PC-9 (cell line): ENCODE measurements at regions of chr9 and their contacts with region 1.

Region 1: GRCh38 chr9:88578121-88579054 is 43.4 kb downstream of the NXNL2 start:
- DNase-seq: peak; percentile 52 to 87
- H3K4me3 ChIP-seq: peak overlapping the region; percentile 25; the same call in 1 of the 2 replicates
- H3K27ac ChIP-seq: no peak overlapping the region
- H3K4me1 ChIP-seq: peaks cover 4% of the 10 kb centered on the region; the same call in 1 of the 2 replicates
- H3K27me3 ChIP-seq: no peaks in the 10 kb centered on the region
- CTCF ChIP-seq: peak; percentile 93

Region 2: GRCh38 chr9:87684627-87685219 is 893.7 kb before region 1 on chr9:
- CTCF ChIA-PET with region 1: no interaction called
- POLR2A ChIA-PET with region 1: no interaction called
- intact Hi-C with region 1: loop called (anchors 10 kb)
- DNase-seq: peak in 1 of 2 experiments; percentile 64
- H3K4me3 ChIP-seq: no peak overlapping the region
- H3K27ac ChIP-seq: peak overlapping the region; percentile 36; the same call in 1 of the 2 replicates
- H3K4me1 ChIP-seq: 0 out of 2 replicates have a peak, but pooled peaks cover 5% of the 10 kb centered on the region
- H3K27me3 ChIP-seq: no peaks in the 10 kb centered on the region
- CTCF ChIP-seq: peak; percentile 87

Region 3: DNA sequence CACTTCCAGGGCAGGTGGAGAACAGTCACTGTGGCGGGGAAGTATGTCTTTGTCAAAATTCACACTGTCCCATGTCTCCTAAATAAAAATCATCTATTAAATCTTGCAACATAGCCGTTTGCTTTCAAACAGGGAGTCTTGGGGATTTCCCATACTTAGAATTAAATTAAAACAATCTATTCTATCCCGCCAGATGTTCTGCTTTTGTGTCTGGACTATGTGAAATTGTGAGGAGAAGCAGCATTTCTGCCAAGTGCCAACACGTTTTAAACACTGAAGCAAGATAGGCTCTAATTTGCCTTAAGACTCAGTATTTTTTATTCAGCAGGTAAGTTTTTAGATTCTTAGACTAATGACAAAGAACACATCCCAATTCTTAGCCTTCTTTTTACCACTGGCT is 513.8 kb before region 1 on chr9:
- CTCF ChIA-PET with region 1: no interaction called
- POLR2A ChIA-PET with region 1: interaction called, 11 read pairs
- intact Hi-C with region 1: no loop called
- DNase-seq: no peak
- H3K4me3 ChIP-seq: no peak overlapping the region
- H3K27ac ChIP-seq: no peak overlapping the region
- H3K4me1 ChIP-seq: no peaks in the 10 kb centered on the region
- H3K27me3 ChIP-seq: no peaks in the 10 kb centered on the region
- CTCF ChIP-seq: no peak

Region 4: GRCh38 chr9:88106491-88106890 is 471.9 kb before region 1 on chr9:
- CTCF ChIA-PET with region 1: no interaction called
- POLR2A ChIA-PET with region 1: no interaction called
- intact Hi-C with region 1: loop called (anchors 1 kb)
- DNase-seq: peak; percentile 34 to 57
- H3K4me3 ChIP-seq: no peak overlapping the region
- H3K27ac ChIP-seq: no peak overlapping the region
- H3K4me1 ChIP-seq: no peaks in the 10 kb centered on the region
- H3K27me3 ChIP-seq: no peaks in the 10 kb centered on the region
- CTCF ChIP-seq: peak; percentile 71

Region 5: DNA sequence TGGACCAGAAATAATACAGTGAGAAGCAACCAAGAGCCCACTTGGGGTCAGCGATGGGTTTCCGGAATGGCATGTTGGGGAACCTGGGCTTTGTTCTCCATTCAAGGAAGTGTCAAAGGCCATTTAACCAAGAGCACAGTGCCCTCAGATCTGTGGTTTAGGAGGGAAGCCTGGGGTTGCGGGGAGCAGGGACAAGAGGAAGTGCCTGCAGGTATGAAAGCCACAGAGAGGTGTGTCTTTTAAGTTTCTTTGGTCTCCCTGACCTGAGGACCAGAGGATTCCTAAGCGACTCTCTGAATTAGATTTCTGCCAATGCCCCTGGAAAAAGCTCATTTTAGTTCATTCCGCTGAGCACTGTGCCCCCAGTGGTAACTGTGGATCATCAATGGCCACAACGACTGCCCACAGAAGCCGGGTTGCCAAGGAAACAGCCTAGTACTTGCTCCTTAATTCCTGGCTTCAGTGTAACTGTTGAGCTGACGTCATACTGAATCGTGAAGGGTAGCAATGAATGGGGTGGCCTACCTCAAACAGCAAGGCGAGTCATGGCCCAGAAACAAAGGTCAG is 297.5 kb before region 1 on chr9:
- CTCF ChIA-PET with region 1: no interaction called
- POLR2A ChIA-PET with region 1: no interaction called
- intact Hi-C with region 1: loop called (anchors 5 kb)
- DNase-seq: peak; percentile 77 to 83
- H3K4me3 ChIP-seq: peak overlapping the region; percentile 14; the same call in 1 of the 2 replicates
- H3K27ac ChIP-seq: peak overlapping the region; percentile 60
- H3K4me1 ChIP-seq: peaks cover 30% of the 10 kb centered on the region
- H3K27me3 ChIP-seq: no peaks in the 10 kb centered on the region
- CTCF ChIP-seq: 0 out of 2 replicates have a peak, but pooled peaks have one; percentile 26

Region 6: DNA sequence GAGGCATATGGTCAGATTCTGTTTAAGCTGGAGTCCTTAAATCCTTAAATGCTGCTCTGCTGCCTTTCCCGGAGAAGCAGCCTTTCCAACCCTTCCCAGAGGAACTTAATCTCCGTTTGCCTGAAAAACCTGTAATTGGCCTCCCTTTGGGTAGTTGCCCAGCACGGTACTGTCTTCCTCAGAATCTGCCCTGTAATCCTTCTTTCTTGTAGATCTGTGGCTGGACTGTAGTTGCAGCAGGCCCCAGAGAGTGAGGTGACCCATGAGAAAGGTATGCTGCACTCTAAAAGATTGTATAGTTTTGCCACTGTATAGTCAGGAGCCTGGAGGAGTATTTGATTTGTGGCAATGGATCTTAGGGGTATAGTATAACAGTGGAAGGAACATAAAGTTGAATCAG is 178.4 kb before region 1 on chr9:
- CTCF ChIA-PET with region 1: no interaction called
- POLR2A ChIA-PET with region 1: no interaction called
- intact Hi-C with region 1: loop called (anchors 1 kb)
- DNase-seq: peak; percentile 56 to 75
- H3K4me3 ChIP-seq: no peak overlapping the region
- H3K27ac ChIP-seq: peak overlapping the region; percentile 52
- H3K4me1 ChIP-seq: peaks cover 25% of the 10 kb centered on the region
- H3K27me3 ChIP-seq: no peaks in the 10 kb centered on the region
- CTCF ChIP-seq: no peak

Region 7: DNA sequence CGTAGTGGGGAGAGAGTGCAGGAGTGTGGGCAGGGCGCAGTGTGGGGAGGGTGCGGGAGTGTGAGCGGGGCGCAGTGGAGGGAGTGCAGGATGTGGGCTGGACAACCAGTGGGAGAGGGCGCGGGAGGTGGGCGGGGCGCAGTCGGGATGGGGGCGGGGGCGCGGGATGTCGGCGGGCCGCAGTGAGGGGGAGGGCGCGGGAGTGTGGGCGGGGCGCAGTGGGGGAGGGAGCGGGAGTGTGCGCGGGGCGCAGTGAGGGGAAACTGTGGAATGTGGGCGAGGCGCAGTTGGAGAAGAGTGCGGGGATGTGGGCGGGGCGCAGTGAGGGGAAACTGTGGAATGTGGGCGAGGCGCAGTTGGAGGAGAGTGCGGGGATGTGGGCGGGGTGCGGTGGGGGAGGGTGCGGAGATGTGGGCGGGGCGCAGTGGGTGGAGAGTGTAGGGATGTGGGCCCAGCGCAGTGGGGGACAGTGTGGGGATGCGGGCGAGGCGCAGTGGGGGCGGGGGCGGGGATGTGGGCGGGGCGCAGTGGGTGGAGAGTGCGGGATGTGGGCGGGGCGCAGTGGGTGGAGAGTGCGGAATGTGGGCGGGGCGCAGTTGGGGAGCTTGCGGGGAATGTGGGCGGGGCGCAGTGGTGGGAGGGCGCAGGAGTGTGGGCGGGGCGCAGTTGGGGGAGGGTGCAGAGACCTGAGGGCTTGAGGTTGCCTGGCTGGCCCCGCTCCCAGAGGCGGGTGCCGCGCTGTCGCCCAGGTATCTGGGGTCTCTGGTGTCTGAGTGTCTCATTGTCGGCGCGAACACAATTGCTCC is 43.7 kb before region 1 on chr9 and contains the start of gene NXNL2:
- CTCF ChIA-PET with region 1: interaction called, 3 read pairs
- POLR2A ChIA-PET with region 1: no interaction called
- intact Hi-C with region 1: loop called (anchors 1 kb)
- DNase-seq: peak; percentile 55 to 90
- H3K4me3 ChIP-seq: peak within 1 kb of the TSS; percentile 67
- H3K27ac ChIP-seq: peak within 1 kb of the TSS; percentile 65
- H3K4me1 ChIP-seq: peaks cover 33% of the 10 kb centered on the region
- H3K27me3 ChIP-seq: no peaks in the 10 kb centered on the region
- CTCF ChIP-seq: no peak
- total RNA-seq, gene NXNL2: 5.5 and 8.7 TPM in 2 replicates